Gastrocnemius medialis (tissue), 4 donors: ENCODE measurements at regions of chr3 and their contacts with region 1.

Region 1: DNA sequence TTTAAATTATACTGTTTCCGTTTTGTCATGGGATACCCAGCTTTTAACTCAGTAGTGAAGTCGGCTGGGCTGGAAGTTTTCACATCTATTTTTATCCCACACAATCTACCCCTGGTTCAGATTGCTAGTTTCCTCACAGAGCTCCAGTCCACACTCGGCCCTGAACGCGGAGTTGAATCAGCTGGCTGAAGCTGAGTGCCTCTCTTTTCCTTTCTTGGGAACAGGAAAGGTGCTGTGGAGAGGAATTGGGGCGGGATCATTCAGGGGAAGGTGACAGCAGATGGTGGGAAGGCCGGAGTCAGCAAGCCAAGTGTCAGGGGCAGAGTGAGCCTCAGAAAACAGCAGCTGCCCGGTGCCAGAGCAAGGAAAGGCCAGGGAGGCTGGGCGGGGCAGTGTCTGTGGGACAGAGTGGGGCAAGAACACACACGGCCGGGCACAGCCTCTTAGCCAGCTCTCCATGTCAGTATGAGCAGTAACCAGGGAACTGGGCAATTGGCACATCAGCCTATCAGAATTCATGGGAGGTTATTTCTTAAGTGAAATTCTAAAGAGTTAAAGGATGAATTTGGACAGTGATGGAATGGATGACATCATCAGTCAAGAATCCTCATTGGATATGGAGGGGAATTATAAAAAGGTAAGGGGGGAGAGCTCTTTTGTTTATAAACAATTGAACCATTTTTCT is 135.7 kb upstream of the IL12A start:
- DNase-seq: peak; percentile 87 to 92
- ATAC-seq: peak; percentile 66 to 73
- H3K4me3 ChIP-seq: peak overlapping the region; percentile 51 to 69 (median 60)
- H3K27ac ChIP-seq: peak overlapping the region; percentile 86 to 97 (median 92)
- H3K4me1 ChIP-seq: peaks cover 64 to 72% of the 10 kb centered on the region in 2 donors
- H3K27me3 ChIP-seq: no peaks in the 10 kb centered on the region
- CTCF ChIP-seq: no peak
- POLR2A ChIP-seq: peak; percentile 74 to 83

Region 2: GRCh38 chr3:159693226-159693625 is 159.7 kb before region 1 on chr3:
- in situ Hi-C with region 1: no loop called
- intact Hi-C with region 1: no loop called
- DNase-seq: no peak
- ATAC-seq: no peak
- H3K4me3 ChIP-seq: no peak overlapping the region
- H3K27ac ChIP-seq: no peak overlapping the region
- H3K4me1 ChIP-seq: no peaks in the 10 kb centered on the region
- H3K27me3 ChIP-seq: no peaks in the 10 kb centered on the region
- CTCF ChIP-seq: no peak
- POLR2A ChIP-seq: no peak

Region 3: DNA sequence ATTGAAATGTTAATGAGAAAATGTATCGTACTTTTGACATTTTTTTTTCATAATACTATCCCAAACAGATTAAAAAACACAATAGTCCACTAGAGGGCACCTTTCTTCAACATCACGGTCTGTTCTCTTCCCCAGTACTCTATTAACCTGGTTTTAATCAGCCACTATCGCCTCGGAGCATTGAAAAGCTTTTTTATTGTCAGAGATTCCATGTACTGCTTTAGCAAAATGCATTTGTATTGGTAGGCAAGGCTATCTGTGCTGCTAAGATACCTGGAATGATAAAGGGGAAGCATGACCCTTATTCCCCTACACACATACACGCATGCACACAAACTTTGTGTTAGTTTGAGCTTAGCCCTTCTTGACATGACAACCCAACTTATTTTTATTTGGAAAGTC is 24.4 kb before region 1 on chr3:
- in situ Hi-C with region 1: no loop called
- intact Hi-C with region 1: loop called (anchors 2 kb)
- DNase-seq: no peak
- ATAC-seq: peak; percentile 61 to 66
- H3K4me3 ChIP-seq: peak overlapping the region; percentile 17 to 51 (median 24)
- H3K27ac ChIP-seq: peak overlapping the region; percentile 80 to 84 (median 82)
- H3K4me1 ChIP-seq: peaks cover 34 to 48% of the 10 kb centered on the region in 2 donors
- H3K27me3 ChIP-seq: no peaks in the 10 kb centered on the region
- CTCF ChIP-seq: peak; percentile 58 to 65 (median 63)
- POLR2A ChIP-seq: no peak

Region 4: GRCh38 chr3:159841766-159842165 is 11.2 kb before region 1 on chr3:
- in situ Hi-C with region 1: no loop called
- intact Hi-C with region 1: loop called (anchors 1 kb)
- DNase-seq: no peak
- ATAC-seq: no peak
- H3K4me3 ChIP-seq: peak overlapping the region in 1 of 4 donors; percentile 63
- H3K27ac ChIP-seq: peak overlapping the region; percentile 75 to 85 (median 84)
- H3K4me1 ChIP-seq: peaks cover 57 to 63% of the 10 kb centered on the region in 2 donors
- H3K27me3 ChIP-seq: no peaks in the 10 kb centered on the region
- CTCF ChIP-seq: no peak
- POLR2A ChIP-seq: no peak

Region 5: GRCh38 chr3:160801386-160802118 is 948.6 kb after region 1 on chr3:
- in situ Hi-C with region 1: no loop called
- intact Hi-C with region 1: loop called (anchors 10 kb)
- DNase-seq: peak; percentile 83 to 85
- ATAC-seq: peak; percentile 83 to 84
- H3K4me3 ChIP-seq: peak overlapping the region; percentile 27 to 53 (median 39)
- H3K27ac ChIP-seq: peak overlapping the region; percentile 91 to 94 (median 92)
- H3K4me1 ChIP-seq: peaks cover 89 to 92% of the 10 kb centered on the region in 2 donors
- H3K27me3 ChIP-seq: no peaks in the 10 kb centered on the region
- CTCF ChIP-seq: no peak
- POLR2A ChIP-seq: peak; percentile 34 to 63

Region 6: DNA sequence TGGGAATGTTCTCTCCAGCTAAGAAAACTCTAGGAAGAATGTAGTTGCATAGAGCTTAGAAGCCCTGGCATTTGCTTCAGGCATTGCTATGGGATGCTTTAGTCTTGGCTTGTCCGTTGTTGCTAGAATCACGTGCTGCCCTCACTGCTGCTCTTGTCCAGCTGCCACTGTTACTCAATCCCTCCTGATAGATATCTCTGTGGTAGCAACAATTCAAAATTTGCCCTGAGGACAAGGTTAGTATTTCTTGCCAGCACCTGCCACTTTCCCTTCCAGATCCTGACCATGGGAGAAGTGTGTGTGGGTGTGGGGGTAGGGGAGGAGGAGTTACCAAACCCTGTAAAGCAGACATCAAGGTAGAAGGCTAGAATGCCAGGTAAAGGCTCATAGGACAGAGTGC is 1016.9 kb after region 1 on chr3:
- in situ Hi-C with region 1: no loop called
- intact Hi-C with region 1: loop called (anchors 10 kb)
- DNase-seq: peak; percentile 92 to 93
- ATAC-seq: peak; percentile 94 to 95
- H3K4me3 ChIP-seq: peak overlapping the region; percentile 41 to 50 (median 46)
- H3K27ac ChIP-seq: peak overlapping the region; percentile 89 to 92 (median 91)
- H3K4me1 ChIP-seq: peaks cover 76 to 77% of the 10 kb centered on the region in 2 donors
- H3K27me3 ChIP-seq: no peaks in the 10 kb centered on the region
- CTCF ChIP-seq: no peak
- POLR2A ChIP-seq: peak in 1 of 2 donors; percentile 11